ENCODE measurements at regions of chr1 and their contacts with region 1.

Region 1: GRCh38 chr1:94068999-94069918 is 51.7 kb downstream of the ABCA4 start:
- DNase-seq: peak; percentile 80
- H3K4me3 ChIP-seq: no peak overlapping the region
- H3K27ac ChIP-seq: no peak overlapping the region
- H3K4me1 ChIP-seq: peaks cover 27% of the 10 kb centered on the region
- H3K27me3 ChIP-seq: no peaks in the 10 kb centered on the region
- CTCF ChIP-seq: no peak

Region 2: GRCh38 chr1:94130851-94131595 is 61.8 kb after region 1 on chr1:
- CTCF ChIA-PET with region 1: no interaction called
- POLR2A ChIA-PET with region 1: no interaction called
- intact Hi-C with region 1: no loop called
- DNase-seq: no peak
- H3K4me3 ChIP-seq: no peak overlapping the region
- H3K27ac ChIP-seq: no peak overlapping the region
- H3K4me1 ChIP-seq: no peaks in the 10 kb centered on the region
- H3K27me3 ChIP-seq: no peaks in the 10 kb centered on the region
- CTCF ChIP-seq: no peak

Region 3: GRCh38 chr1:94310570-94311270 is 241.5 kb after region 1 on chr1:
- CTCF ChIA-PET with region 1: no interaction called
- POLR2A ChIA-PET with region 1: interaction called, 10 read pairs
- intact Hi-C with region 1: no loop called
- DNase-seq: no peak
- H3K4me3 ChIP-seq: no peak overlapping the region
- H3K27ac ChIP-seq: no peak overlapping the region
- H3K4me1 ChIP-seq: no peaks in the 10 kb centered on the region
- H3K27me3 ChIP-seq: no peaks in the 10 kb centered on the region
- CTCF ChIP-seq: no peak

Region 4: GRCh38 chr1:94463765-94464330 is 394.6 kb after region 1 on chr1:
- CTCF ChIA-PET with region 1: no interaction called
- POLR2A ChIA-PET with region 1: no interaction called
- intact Hi-C with region 1: loop called (anchors 5 kb)
- DNase-seq: peak; percentile 70
- H3K4me3 ChIP-seq: no peak overlapping the region
- H3K27ac ChIP-seq: no peak overlapping the region
- H3K4me1 ChIP-seq: no peaks in the 10 kb centered on the region
- H3K27me3 ChIP-seq: no peaks in the 10 kb centered on the region
- CTCF ChIP-seq: peak; percentile 73